ENCODE measurements at regions of chr19 and their contacts with region 1.

Region 1: DNA sequence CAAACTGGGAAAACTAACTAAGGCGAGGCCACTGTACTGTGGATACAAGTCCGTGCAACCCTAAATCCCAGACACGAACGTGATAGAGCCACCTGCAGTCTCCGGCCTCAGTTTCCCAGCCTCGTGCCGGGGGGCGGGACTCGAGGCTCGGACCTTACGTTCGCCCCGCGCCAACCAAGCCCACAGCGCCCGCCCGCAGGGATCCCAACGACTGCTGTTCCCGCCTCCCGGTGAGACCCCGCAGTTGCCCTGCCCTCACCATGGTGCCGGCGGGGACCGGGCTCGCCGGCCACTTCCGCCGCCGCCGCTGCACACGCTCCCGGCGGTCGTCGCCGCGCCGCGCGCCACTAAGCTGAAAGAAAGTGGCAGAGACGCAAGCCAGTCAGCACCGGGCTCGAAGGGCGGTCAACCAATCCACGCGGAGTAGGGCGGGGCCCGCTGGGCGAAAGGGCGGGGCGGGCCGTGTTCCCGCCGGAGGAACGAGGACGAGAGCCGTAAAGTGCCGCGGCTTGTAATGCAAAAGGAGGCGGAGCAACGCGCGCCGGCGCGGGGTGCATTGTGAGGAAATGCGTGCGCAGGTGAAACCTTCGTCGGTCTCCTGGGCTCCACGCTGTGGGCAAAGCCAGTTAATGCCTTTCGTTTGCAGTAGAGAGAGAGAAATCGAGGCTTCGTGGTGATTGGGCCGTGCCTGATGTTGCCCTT is at the start of gene LSM4:
- DNase-seq: peak; percentile 98
- ATAC-seq: peak; percentile 94
- H3K4me3 Mint-ChIP-seq: peak within 1 kb of the TSS; percentile 85
- H3K27ac Mint-ChIP-seq: peak within 1 kb of the TSS; percentile 91
- H3K4me1 Mint-ChIP-seq: peaks cover 46% of the 10 kb centered on the region
- H3K27me3 Mint-ChIP-seq: no peaks in the 10 kb centered on the region
- CTCF ChIP-seq: no peak
- total RNA-seq, gene LSM4: 59.2 and 70.3 TPM in 2 replicates

Region 2: GRCh38 chr19:17468302-17469091 is 854.4 kb before region 1 on chr19:
- CTCF ChIA-PET with region 1: no interaction called
- POLR2A ChIA-PET with region 1: no interaction called
- intact Hi-C with region 1: no loop called
- DNase-seq: no peak
- ATAC-seq: no peak
- H3K4me3 Mint-ChIP-seq: peak overlapping the region; percentile 91
- H3K27ac Mint-ChIP-seq: peak overlapping the region; percentile 84
- H3K4me1 Mint-ChIP-seq: peaks cover 23% of the 10 kb centered on the region
- H3K27me3 Mint-ChIP-seq: peaks cover 4% of the 10 kb centered on the region
- CTCF ChIP-seq: no peak

Region 3: DNA sequence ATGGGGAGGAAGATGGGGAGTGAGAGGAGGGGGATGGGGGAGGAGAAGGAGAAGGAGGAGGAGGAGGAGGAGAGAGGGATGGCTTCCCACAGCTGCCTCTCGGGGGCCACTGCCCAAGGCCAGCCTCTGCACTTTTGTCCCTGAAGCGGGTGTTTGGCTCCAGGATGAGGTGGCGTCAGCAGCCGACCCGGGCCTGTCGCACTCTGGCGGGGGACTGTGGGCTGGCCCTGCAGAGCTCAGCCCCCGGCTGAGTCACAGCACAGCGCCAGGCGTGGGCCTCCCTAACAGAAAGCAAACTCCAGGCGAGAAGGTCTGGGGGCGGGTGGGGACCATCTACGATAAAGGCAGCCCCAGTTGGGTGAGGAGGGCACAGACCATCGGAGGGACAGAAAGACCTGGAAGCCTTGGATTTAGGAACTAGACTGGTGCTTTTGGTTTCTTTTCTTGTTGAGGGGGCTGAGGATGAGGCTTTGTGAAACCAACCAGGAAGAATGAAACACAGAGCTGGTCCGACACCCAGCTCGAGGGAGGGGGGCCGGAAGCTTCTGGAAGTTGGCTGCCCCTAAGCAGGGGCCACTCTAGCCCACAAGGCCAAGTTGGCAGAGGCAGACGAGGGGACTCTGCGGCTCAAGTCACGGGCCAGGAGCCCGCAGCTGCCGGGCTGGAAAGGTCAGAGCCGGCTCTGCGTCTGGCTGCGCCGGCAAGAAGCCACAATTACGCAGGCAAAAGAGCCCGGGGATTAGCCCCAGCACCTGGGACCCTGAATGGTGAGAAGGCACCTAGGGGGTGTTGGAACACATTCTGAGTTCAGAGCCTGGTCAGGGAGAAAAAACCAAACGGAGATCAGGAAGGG is 18.2 kb before region 1 on chr19:
- CTCF ChIA-PET with region 1: interaction called, 8 read pairs
- POLR2A ChIA-PET with region 1: interaction called, 83 read pairs
- intact Hi-C with region 1: loop called (anchors 1 kb)
- DNase-seq: peak; percentile 74
- ATAC-seq: peak; percentile 73
- H3K4me3 Mint-ChIP-seq: peak overlapping the region; percentile 85
- H3K27ac Mint-ChIP-seq: peak overlapping the region; percentile 95
- H3K4me1 Mint-ChIP-seq: peaks cover 54% of the 10 kb centered on the region
- H3K27me3 Mint-ChIP-seq: no peaks in the 10 kb centered on the region
- CTCF ChIP-seq: no peak

Region 4: GRCh38 chr19:18310118-18310909 is 12.6 kb before region 1 on chr19:
- CTCF ChIA-PET with region 1: interaction called, 8 read pairs
- POLR2A ChIA-PET with region 1: interaction called, 83 read pairs
- intact Hi-C with region 1: loop called (anchors 1 kb)
- DNase-seq: no peak
- ATAC-seq: no peak
- H3K4me3 Mint-ChIP-seq: no peak overlapping the region
- H3K27ac Mint-ChIP-seq: no peak overlapping the region
- H3K4me1 Mint-ChIP-seq: peaks cover 24% of the 10 kb centered on the region
- H3K27me3 Mint-ChIP-seq: no peaks in the 10 kb centered on the region
- CTCF ChIP-seq: no peak

Region 5: DNA sequence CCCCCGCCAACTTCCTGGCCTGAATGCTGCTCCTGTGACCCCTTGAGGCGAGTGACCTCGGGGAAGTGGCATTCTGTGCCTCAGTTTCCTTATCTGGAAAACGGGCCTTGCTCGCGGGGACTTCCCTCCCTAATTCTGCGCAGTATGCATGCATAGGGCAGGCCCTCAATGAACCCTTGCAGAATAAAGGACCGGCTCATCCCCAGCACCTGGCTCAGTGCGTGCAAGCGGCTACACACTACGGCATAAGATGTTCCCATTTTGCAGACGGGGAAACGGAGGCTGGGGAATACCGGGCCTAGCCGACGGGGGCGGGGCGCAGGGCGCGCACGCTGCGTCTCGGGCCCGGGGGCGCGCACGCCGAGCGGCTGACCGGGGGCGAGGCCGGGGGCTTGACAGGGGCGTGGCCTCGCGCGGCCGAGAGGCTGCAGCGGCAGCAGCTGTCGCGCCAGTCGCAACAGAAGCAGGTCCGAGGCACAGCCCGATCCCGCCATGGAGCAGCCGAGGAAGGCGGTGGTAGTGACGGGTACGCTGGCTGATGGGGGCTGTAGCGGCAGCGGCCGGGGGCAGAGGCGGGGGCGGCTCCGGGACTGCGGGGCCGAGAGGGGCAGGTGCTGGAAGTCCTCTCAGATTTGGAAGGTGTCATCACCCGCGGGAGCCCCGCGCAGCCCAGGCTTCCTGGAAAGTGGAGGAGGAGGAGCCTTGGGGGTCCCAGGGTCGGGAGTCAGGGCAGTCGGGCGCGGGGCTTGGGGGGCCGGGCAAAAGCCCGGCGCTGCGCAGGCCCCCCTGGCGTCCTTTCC is 17.5 kb after region 1 on chr19 and contains the start of gene PGPEP1:
- CTCF ChIA-PET with region 1: no interaction called
- POLR2A ChIA-PET with region 1: interaction called, 10 read pairs
- intact Hi-C with region 1: no loop called
- DNase-seq: peak; percentile 70
- ATAC-seq: peak; percentile 72
- H3K4me3 Mint-ChIP-seq: peak within 1 kb of the TSS; percentile 80
- H3K27ac Mint-ChIP-seq: peak within 1 kb of the TSS; percentile 3
- H3K4me1 Mint-ChIP-seq: peaks cover 13% of the 10 kb centered on the region
- H3K27me3 Mint-ChIP-seq: peaks cover 6% of the 10 kb centered on the region
- CTCF ChIP-seq: no peak
- total RNA-seq, gene PGPEP1: 5.6 and 6.9 TPM in 2 replicates

Region 6: DNA sequence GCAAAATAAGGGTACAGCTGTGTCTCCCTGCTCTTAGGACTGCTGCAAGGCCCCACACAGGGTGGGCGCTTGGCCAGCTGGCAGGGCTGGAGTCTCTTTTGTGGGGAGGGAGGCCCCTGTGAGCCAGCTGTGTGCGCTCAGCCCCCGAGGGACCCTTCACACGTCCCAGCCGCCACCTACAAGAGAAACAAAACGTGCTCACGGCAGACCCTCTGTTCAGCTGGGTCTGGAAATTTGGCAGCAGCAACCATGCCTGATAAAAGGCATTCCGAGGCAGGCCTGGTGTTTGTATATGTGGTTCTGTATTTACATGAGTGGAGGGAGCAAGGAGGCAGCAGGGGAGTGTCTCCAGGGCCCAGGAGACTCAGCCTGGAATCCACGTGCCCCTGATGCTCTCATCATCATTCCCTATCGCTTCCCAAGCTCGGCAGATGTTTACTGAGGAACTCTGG is 410.3 kb after region 1 on chr19:
- CTCF ChIA-PET with region 1: no interaction called
- POLR2A ChIA-PET with region 1: no interaction called
- intact Hi-C with region 1: no loop called
- DNase-seq: no peak
- ATAC-seq: no peak
- H3K4me3 Mint-ChIP-seq: no peak overlapping the region
- H3K27ac Mint-ChIP-seq: no peak overlapping the region
- H3K4me1 Mint-ChIP-seq: peaks cover 5% of the 10 kb centered on the region
- H3K27me3 Mint-ChIP-seq: no peaks in the 10 kb centered on the region
- CTCF ChIP-seq: no peak

Measured in activated B cell treated with CpG ODN at 0.5 μM for 24 hours (primary cell).